ENCODE measurements at regions of chr16 and their contacts with region 1.

Region 1: GRCh38 chr16:322476-323143 is 29.9 kb downstream of the AXIN1 start:
- DNase-seq: no peak
- H3K4me3 ChIP-seq: no peak overlapping the region
- H3K27ac ChIP-seq: no peak overlapping the region
- H3K4me1 ChIP-seq: peaks cover 12% of the 10 kb centered on the region
- H3K27me3 ChIP-seq: no peaks in the 10 kb centered on the region
- CTCF ChIP-seq: no peak

Region 2: DNA sequence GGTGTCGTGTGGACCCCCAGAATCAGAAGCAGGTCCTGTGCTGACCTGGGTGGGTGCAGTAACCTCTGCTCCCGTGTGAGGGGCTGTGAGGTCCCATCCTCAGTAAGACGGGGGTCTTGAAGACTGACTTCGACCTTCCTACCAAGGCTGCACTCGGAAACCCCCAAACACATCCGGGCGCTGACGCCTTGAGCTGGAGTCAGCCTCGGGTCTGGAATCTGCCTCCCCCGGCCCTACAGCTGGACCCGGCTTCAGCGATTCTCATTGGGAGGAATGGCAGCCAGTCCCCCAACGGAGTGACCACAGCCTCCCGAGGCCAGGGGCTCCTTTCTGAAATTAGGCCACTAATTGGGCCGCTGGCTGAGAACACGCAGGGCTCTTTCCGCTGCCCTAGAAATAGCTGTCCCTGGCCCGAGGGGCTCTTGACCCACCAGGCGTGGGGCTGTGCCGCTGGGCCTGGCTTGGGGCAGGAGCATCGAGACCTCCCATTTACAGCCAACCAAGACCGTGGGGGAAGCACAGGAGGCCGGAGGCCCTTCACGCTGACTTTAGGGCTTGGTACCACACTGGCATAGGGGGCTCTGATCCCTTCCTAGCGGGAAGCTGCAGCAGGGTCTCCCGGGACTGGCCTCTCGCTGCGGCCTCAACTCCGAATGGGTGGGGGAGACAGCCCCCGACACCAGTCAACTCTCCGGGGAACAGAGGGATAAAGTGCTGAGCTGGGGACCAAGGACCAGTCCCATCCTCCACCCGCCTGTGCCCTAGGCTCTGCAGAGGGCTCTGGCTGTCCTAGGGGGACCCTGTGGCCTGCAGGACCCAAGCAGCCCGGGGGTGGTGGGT is 480.5 kb after region 1 on chr16:
- CTCF ChIA-PET with region 1: no interaction called
- POLR2A ChIA-PET with region 1: interaction called, 11 read pairs
- intact Hi-C with region 1: no loop called
- DNase-seq: no peak
- H3K4me3 ChIP-seq: no peak overlapping the region
- H3K27ac ChIP-seq: no peak overlapping the region
- H3K4me1 ChIP-seq: no peaks in the 10 kb centered on the region
- H3K27me3 ChIP-seq: peaks cover 45% of the 10 kb centered on the region
- CTCF ChIP-seq: no peak

Measured in A673 (cell line).